Dorsolateral prefrontal cortex (tissue), 120 donors: ENCODE measurements at regions of chr22 and their contacts with region 1.

Region 1: GRCh38 chr22:50705208-50705691 is 32.6 kb downstream of the SHANK3 start:
- DNase-seq: peak in 9 of 10 donors; percentile 57 to 91 (median 81)
- H3K4me3 ChIP-seq: peak overlapping the region in 51 of 59 donors; percentile 6 to 62 (median 44)
- H3K27ac ChIP-seq: peak overlapping the region in 43 of 59 donors; percentile 6 to 92 (median 56)
- H3K27me3 ChIP-seq: no peaks in the 10 kb centered on the region
- CTCF ChIP-seq: no peak

Region 2: DNA sequence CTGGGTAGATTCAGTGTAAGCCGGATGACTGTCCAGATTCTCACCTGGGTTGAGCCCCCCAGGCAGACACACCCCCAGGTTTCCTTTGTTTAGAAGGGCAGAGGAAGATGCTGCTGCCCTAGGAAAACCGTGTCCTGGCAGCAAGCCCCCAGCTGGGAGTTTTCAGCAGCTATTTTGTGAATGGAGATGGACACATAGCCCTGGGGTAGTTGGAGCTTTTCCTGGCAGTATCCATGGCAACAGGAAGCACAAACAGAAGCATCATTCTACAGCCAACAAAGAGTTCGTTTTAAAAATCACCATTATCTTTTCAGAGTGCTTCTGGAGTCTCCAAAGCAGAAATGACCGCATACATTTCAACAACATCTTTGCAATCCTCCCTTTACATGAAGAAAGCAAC is 1123.1 kb before region 1 on chr22:
- intact Hi-C with region 1: no loop called
- DNase-seq: peak; percentile 14 to 90 (median 72)
- H3K4me3 ChIP-seq: peak overlapping the region in 2 of 59 donors; percentile 1 to 24
- H3K27ac ChIP-seq: peak overlapping the region in 12 of 59 donors; percentile 4 to 70 (median 31)
- H3K27me3 ChIP-seq: no peaks in the 10 kb centered on the region
- CTCF ChIP-seq: peak in 3 of 56 donors; percentile 8 to 26 (median 9)

Region 3: DNA sequence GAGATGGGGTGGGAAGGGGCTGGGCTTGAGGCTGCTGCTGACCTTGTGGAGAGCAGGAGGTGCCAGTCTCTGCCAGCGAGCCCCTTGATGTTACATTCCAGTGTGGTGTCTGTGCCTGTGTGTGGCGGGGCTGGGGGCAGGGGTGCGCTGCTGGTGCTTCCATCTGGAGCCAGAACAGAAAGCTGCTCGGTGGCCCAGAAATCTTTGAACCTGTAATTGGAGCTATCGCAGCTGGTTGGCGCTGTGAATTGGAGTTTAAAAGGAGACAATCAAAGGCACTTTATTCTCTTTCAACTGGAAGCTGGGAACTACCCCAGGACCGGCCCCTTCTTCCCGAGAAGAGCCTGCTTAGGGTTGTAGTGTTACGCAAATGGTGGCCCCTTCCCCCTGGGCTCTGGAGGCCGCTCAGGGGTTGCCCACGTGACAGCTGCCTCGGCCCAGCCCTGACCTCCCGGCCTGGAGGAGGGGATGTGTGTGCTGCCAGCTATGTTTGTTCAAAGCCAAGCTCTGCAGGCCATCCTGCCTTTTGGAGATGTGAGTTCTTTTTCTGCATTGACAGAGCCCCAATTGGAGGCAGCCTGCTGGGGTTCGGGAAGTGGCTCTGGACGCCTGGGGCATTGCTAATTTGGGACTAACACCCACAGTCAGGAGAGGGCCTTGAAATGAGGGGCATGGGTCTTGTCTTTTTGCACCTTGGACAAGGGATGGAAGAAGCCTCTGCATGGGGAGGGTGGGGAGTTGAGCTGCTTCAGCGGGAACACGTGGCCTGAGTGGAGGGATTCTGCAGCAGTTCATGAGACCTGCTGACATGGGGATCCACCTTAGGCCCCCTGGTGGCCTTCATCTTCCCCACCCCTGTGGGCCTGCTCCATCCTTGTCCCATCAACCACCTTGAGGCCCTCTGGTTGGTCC is 63.3 kb before region 1 on chr22:
- intact Hi-C with region 1: no loop called
- DNase-seq: peak in 4 of 10 donors; percentile 43 to 63 (median 59)
- H3K4me3 ChIP-seq: peak overlapping the region in 23 of 59 donors; percentile 2 to 38 (median 21)
- H3K27ac ChIP-seq: peak overlapping the region in 48 of 59 donors; percentile 3 to 72 (median 51)
- H3K27me3 ChIP-seq: peaks cover 0 to 31% (median 8%) of the 10 kb centered on the region in 45 donors
- CTCF ChIP-seq: peak in 54 of 56 donors; percentile 19 to 72 (median 55)

Region 4: GRCh38 chr22:50656122-50657070 is 48.9 kb before region 1 on chr22:
- intact Hi-C with region 1: no loop called
- DNase-seq: no peak
- H3K4me3 ChIP-seq: no peak overlapping the region
- H3K27ac ChIP-seq: no peak overlapping the region
- H3K27me3 ChIP-seq: peaks cover 0 to 3% (median 0%) of the 10 kb centered on the region in 45 donors
- CTCF ChIP-seq: no peak

Region 5: GRCh38 chr22:50674606-50675549 is 30.4 kb before region 1 on chr22:
- intact Hi-C with region 1: no loop called
- DNase-seq: peak in 3 of 10 donors; percentile 33 to 58 (median 48)
- H3K4me3 ChIP-seq: peak overlapping the region; percentile 15 to 74 (median 63)
- H3K27ac ChIP-seq: peak overlapping the region in 4 of 59 donors; percentile 33 to 61 (median 56)
- H3K27me3 ChIP-seq: peaks cover 0 to 16% (median 0%) of the 10 kb centered on the region in 45 donors
- CTCF ChIP-seq: no peak

Region 6: DNA sequence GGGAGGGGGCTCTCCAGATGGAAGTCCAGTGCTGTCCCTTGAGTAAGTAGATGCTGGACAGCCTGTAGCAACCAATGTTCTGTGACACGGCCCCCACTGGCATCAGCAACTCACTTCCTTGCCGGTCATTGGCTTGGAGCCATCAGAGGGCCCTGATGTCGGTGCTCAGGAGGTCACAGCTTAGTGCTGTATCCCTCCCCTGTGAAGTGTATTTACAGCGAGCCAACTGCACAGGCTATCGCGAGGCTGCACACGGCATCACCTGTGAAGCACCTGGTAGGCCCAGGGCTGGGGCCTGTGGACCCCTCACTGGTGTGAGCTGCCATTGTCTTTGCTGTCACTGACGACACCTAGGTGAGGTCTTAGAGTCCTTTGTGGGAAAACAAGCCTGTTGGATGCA is 19.4 kb after region 1 on chr22:
- intact Hi-C with region 1: loop called in 1 of 2 experiments (anchors 1 kb)
- DNase-seq: peak in 1 of 10 donors; percentile 22
- H3K4me3 ChIP-seq: no peak overlapping the region
- H3K27ac ChIP-seq: peak overlapping the region in 27 of 59 donors; percentile 2 to 86 (median 36)
- H3K27me3 ChIP-seq: no peaks in the 10 kb centered on the region
- CTCF ChIP-seq: no peak